Astrocyte of the cerebellum (primary cell): ENCODE measurements at regions of chr2 and their contacts with region 1.

Region 1: DNA sequence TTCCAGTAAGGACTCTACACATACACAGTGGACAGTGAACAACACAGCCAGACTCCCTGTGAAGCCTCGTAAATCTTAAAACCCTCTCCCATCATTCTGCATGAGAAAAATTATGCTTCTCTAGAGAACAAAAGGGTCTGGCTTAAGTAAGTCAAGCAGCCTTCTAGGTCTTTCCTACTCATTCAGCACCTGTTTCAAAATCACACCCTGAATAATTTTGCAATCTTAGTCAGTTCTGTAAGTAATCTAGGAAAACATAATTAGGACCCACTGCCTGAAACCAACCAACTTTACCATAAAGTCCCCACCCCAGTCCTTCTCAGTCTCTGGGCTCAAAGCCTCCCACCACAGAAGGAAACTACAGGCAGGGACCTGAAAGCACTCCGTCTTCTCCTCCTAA is 19.7 kb downstream of the IAH1 start:
- DNase-seq: no peak
- H3K4me3 ChIP-seq: no peak overlapping the region
- CTCF ChIP-seq: no peak

Region 2: GRCh38 chr2:9585486-9585885 is 91.4 kb after region 1 on chr2:
- in situ Hi-C with region 1: loop called (anchors 5 kb)
- DNase-seq: no peak
- H3K4me3 ChIP-seq: no peak overlapping the region
- CTCF ChIP-seq: no peak

Region 3: DNA sequence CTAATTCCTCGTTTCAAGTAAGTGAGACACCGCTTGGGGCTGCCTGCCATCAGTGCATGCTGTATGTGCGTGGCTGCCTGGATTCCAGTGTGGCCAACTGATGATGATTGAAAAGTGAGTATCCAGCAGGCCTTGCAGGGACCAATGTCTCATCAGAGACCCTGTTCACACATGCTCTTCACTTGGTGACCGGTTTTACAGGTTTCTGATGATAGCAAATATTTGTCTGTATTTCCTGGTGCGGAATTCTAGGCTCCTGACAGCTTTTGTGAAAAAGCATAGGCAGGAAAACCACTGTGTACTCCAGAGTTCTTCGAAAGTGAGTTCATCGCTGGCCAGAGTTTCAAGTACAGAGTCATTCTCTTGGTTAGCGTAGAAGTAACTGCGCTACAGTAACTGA is 150.5 kb after region 1 on chr2:
- in situ Hi-C with region 1: no loop called
- DNase-seq: no peak
- H3K4me3 ChIP-seq: no peak overlapping the region
- CTCF ChIP-seq: no peak